Sciatic nerve (tissue), 2 donors: ENCODE measurements at regions of chr21 and their contacts with region 1.

Region 1: DNA sequence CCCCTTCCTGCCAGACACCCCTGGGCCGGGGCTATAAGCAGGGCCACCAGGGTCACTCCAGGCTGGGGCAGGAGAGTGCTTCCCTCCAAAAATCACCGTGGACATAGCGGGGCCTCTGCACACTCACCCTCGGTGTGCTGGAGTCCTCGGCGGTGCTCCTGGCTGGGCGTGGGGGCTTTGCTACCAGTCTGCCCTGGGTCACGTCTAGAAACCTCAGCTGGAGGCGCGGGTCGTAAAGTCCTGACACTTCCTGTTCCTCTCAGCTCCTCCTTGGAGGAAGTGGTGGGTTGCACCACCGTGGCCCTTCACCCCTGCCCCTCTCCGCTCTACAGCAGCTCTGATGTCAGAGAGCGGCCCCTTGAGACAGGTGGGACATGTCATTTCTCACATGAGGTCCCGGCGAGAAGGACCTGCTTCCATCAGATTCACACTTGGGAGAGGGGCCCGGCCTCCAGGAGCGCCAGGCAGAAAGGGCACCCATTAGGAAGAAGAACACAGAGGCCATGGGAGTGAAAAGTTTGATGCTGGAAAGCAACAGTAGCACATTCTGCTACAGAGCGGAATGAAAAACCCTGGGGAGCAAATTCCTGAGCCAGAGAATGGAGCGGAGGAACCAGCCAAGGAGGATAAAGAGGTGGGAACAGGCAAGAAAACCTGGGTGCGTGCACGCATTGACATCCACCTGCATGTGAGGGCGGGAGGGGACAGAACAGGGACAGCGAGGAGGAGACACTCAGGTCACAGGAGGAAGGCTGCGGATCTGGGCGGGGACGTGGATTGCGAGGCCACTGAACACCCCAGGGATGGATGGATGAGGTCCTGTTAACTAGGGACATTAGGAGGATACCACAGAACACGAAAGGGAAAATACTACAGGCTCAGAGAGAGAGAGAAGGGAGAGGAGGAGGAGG is at the start of gene ITGB2:
- DNase-seq: no peak
- ATAC-seq: peak; percentile 21
- total RNA-seq, gene ITGB2: 56.7 TPM

Region 2: GRCh38 chr21:46489800-46490199 is 1568.9 kb after region 1 on chr21:
- intact Hi-C with region 1: loop called (anchors 5 kb)
- DNase-seq: no peak
- ATAC-seq: no peak